PC-9 (cell line): ENCODE measurements at regions of chr1 and their contacts with region 1.

Region 1: DNA sequence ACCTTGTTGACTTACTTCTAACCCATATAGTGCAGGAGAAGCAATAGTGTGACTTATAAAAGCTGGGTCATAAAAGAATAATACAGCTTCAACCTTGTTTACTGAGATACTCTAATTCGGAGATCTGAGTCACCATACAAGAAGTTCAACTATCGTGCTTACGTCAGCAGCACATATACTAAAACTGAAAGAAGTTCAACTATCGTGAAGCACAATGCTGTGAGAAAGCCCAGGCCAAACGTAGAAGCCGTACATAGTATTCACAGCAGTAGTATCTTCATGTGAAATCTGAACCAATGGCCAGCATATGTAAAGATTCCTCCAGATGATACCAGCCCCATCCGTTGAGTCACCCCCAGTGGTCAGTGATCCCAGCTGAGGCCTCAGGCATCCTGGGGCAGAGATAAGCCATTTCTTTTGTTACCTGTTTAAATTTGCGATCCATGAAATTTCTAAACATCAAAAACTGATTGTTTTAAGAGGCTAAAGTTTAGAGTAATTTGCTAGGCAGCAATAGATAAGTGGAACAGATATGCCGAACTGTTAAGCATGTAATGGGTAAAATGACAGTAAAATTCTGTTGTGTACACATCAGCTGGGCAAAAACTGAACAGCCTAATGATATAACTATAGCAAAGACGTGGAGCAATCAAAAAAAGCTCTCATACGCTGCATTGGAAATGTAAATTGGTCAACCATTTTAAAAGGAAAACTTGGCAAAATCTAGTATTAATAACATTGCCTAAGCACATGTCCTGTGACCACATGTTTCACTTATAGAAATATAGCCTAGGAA is 53.9 kb upstream of the SAMD13 start:
- DNase-seq: peak; percentile 58 to 96
- H3K4me3 ChIP-seq: peak overlapping the region; percentile 40; the same call in 1 of the 2 replicates
- H3K27ac ChIP-seq: peak overlapping the region; percentile 73
- H3K4me1 ChIP-seq: peaks cover 25% of the 10 kb centered on the region
- H3K27me3 ChIP-seq: no peaks in the 10 kb centered on the region
- CTCF ChIP-seq: no peak

Region 2: GRCh38 chr1:83882906-83883305 is 364.7 kb before region 1 on chr1:
- CTCF ChIA-PET with region 1: no interaction called
- POLR2A ChIA-PET with region 1: no interaction called
- intact Hi-C with region 1: no loop called
- DNase-seq: no peak
- H3K4me3 ChIP-seq: no peak overlapping the region
- H3K27ac ChIP-seq: no peak overlapping the region
- H3K4me1 ChIP-seq: no peaks in the 10 kb centered on the region
- H3K27me3 ChIP-seq: no peaks in the 10 kb centered on the region
- CTCF ChIP-seq: no peak

Region 3: GRCh38 chr1:84174051-84174556 is 73.5 kb before region 1 on chr1:
- CTCF ChIA-PET with region 1: no interaction called
- POLR2A ChIA-PET with region 1: no interaction called
- intact Hi-C with region 1: loop called (anchors 10 kb)
- DNase-seq: peak; percentile 29 to 84
- H3K4me3 ChIP-seq: no peak overlapping the region
- H3K27ac ChIP-seq: peak overlapping the region; percentile 29
- H3K4me1 ChIP-seq: peaks cover 11% of the 10 kb centered on the region
- H3K27me3 ChIP-seq: no peaks in the 10 kb centered on the region
- CTCF ChIP-seq: no peak

Region 4: DNA sequence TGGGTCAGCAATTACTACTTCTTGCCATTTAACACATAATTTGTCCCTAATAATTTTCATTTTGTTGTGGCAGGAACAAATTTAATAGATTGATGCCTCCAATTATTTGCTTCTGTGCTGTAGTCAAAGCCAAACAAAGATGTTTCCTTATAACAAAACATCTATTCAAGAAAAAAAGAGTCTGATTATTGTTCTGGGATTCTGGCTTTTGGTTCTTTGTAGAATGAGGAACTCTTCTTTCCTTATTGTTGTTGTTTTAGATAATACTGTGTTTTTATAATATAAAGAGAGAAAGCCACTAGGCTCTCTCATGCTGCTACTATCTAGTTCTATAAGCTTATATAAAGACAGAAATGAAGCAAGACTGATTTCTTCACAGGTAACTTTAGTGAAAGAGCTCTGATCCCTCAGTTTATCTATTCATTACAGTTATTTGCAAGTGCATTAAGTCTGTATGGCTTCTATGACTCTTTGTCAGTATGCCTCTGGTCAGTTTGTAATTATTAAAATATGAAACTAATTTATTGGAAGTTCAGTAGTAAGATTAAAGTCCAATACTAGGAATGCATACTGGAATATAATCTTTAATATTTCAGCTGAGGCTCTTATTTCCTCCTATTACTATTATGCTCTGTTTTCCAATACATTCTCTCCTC is 66.1 kb before region 1 on chr1:
- CTCF ChIA-PET with region 1: no interaction called
- POLR2A ChIA-PET with region 1: interaction called, 19 read pairs
- intact Hi-C with region 1: loop called (anchors 10 kb)
- DNase-seq: no peak
- H3K4me3 ChIP-seq: no peak overlapping the region
- H3K27ac ChIP-seq: no peak overlapping the region
- H3K4me1 ChIP-seq: no peaks in the 10 kb centered on the region
- H3K27me3 ChIP-seq: no peaks in the 10 kb centered on the region
- CTCF ChIP-seq: no peak

Region 5: GRCh38 chr1:84298328-84298683 is 50.7 kb after region 1 on chr1:
- CTCF ChIA-PET with region 1: no interaction called
- POLR2A ChIA-PET with region 1: no interaction called
- intact Hi-C with region 1: loop called (anchors 10 kb)
- DNase-seq: peak in 1 of 2 experiments; percentile 33
- H3K4me3 ChIP-seq: peak overlapping the region; percentile 99
- H3K27ac ChIP-seq: no peak overlapping the region
- H3K4me1 ChIP-seq: peaks cover 24% of the 10 kb centered on the region
- H3K27me3 ChIP-seq: no peaks in the 10 kb centered on the region
- CTCF ChIP-seq: no peak

Region 6: GRCh38 chr1:84427520-84428188 is 180.0 kb after region 1 on chr1:
- CTCF ChIA-PET with region 1: no interaction called
- POLR2A ChIA-PET with region 1: no interaction called
- intact Hi-C with region 1: loop called (anchors 1 kb)
- DNase-seq: peak; percentile 36 to 90
- H3K4me3 ChIP-seq: no peak overlapping the region
- H3K27ac ChIP-seq: peak overlapping the region; percentile 24; the same call in 1 of the 2 replicates
- H3K4me1 ChIP-seq: peaks cover 31% of the 10 kb centered on the region
- H3K27me3 ChIP-seq: no peaks in the 10 kb centered on the region
- CTCF ChIP-seq: no peak